ENCODE measurements at regions of chr19 and their contacts with region 1.

Region 1: GRCh38 chr19:6862673-6863078 is 24.7 kb upstream of the ADGRE1 start:
- DNase-seq: peak; percentile 84 to 96 (median 91)
- ATAC-seq: peak; percentile 90
- H3K4me3 ChIP-seq: peak overlapping the region in 1 of 2 experiments; percentile 33
- H3K4me3 Mint-ChIP-seq: peak overlapping the region; percentile 80
- H3K27ac ChIP-seq: peak overlapping the region in 1 of 2 experiments; percentile 68
- H3K27ac Mint-ChIP-seq: peak overlapping the region; percentile 74
- H3K4me1 ChIP-seq: peaks cover 4% of the 10 kb centered on the region
- H3K4me1 Mint-ChIP-seq: peaks cover 17% of the 10 kb centered on the region
- H3K27me3 ChIP-seq: no peaks in the 10 kb centered on the region
- H3K27me3 Mint-ChIP-seq: no peaks in the 10 kb centered on the region
- CTCF ChIP-seq: peak; percentile 61

Region 2: GRCh38 chr19:6048808-6049405 is 813.8 kb before region 1 on chr19:
- CTCF ChIA-PET with region 1: no interaction called
- POLR2A ChIA-PET with region 1: no interaction called
- intact Hi-C with region 1: loop called in 1 of 2 experiments (anchors 1 kb)
- DNase-seq: peak; percentile 62 to 88 (median 79)
- ATAC-seq: peak; percentile 100
- H3K4me3 ChIP-seq: no peak overlapping the region
- H3K4me3 Mint-ChIP-seq: no peak overlapping the region
- H3K27ac ChIP-seq: no peak overlapping the region
- H3K27ac Mint-ChIP-seq: no peak overlapping the region
- H3K4me1 ChIP-seq: peaks cover 3% of the 10 kb centered on the region
- H3K4me1 Mint-ChIP-seq: peaks cover 4% of the 10 kb centered on the region
- H3K27me3 ChIP-seq: no peaks in the 10 kb centered on the region
- H3K27me3 Mint-ChIP-seq: no peaks in the 10 kb centered on the region
- CTCF ChIP-seq: peak; percentile 84

Region 3: DNA sequence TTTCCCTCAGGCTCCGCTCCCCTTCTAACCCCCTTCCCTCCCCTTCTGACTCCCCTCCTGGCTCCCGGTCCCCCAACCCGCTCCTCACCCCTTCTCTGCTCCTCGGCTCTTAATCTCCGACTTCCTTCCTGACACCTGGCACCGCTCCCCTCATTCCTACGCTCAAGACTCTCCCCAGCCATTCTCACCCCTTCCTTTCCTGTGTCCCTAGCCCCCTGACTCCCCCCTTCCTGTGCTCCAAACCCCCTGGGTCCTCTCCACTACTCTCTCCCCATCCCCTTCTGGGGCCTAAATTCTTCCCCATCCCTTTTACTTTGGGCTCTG is 500.7 kb before region 1 on chr19:
- CTCF ChIA-PET with region 1: no interaction called
- POLR2A ChIA-PET with region 1: no interaction called
- intact Hi-C with region 1: loop called in 1 of 2 experiments (anchors 5 kb)
- DNase-seq: no peak
- ATAC-seq: peak; percentile 1
- H3K4me3 ChIP-seq: peak overlapping the region; percentile 78 to 79
- H3K4me3 Mint-ChIP-seq: peak overlapping the region; percentile 93
- H3K27ac ChIP-seq: peak overlapping the region; percentile 72 to 85
- H3K27ac Mint-ChIP-seq: peak overlapping the region; percentile 94
- H3K4me1 ChIP-seq: peaks cover 21% of the 10 kb centered on the region
- H3K4me1 Mint-ChIP-seq: peaks cover 25% of the 10 kb centered on the region
- H3K27me3 ChIP-seq: no peaks in the 10 kb centered on the region
- H3K27me3 Mint-ChIP-seq: no peaks in the 10 kb centered on the region
- CTCF ChIP-seq: no peak

Region 4: DNA sequence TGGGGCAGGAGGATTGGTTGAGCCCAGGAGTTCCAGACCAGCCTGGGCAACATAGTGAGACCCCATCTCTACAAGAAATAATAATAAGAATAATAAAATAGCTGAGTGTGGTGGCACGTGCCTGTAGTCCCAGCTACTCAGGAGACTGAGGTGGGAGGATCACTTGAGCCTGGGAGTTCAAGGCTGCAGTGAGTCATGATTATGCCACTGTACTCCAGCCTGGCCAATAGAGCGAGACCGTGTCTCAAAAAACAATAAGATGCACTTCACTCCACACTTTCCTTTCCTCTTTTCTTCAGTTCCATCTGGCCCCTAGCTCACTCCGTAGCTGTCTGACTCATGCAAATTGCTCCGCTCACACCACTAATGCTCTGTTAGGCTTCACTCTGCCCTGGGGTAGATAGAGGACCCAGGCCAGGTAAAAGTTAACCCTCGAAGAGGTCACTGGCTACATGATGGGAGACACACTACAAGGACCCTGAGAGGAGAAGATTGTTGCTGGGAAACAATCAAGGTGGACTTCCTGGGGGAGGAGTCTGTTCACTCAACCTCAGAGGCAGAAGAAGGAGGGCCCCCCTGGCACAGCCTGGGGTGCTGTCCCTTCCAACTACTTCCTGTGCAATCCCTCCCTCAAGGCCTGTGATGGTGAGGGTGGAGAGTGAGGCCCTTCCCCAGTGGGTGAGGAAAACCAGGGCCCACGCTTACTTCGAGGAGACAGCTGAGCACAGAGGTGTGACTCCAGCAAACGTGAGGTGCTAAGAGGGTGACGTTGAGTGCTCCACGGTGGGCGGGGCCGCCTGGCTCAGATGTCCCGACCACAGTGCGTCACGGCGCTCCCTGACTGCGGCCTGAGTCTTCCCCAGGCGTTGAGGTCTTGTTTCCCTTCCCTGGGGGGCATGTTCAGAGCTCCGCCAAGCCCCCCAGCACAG is 340.7 kb before region 1 on chr19:
- CTCF ChIA-PET with region 1: interaction called, 17 read pairs
- POLR2A ChIA-PET with region 1: interaction called, 7 read pairs
- intact Hi-C with region 1: loop called (anchors 1 kb)
- DNase-seq: peak; percentile 41 to 96 (median 70)
- ATAC-seq: peak; percentile 91
- H3K4me3 ChIP-seq: no peak overlapping the region
- H3K4me3 Mint-ChIP-seq: no peak overlapping the region
- H3K27ac ChIP-seq: peak overlapping the region; percentile 21 to 89
- H3K27ac Mint-ChIP-seq: peak overlapping the region; percentile 63
- H3K4me1 ChIP-seq: peaks cover 26% of the 10 kb centered on the region
- H3K4me1 Mint-ChIP-seq: peaks cover 32% of the 10 kb centered on the region
- H3K27me3 ChIP-seq: no peaks in the 10 kb centered on the region
- H3K27me3 Mint-ChIP-seq: no peaks in the 10 kb centered on the region
- CTCF ChIP-seq: no peak

Region 5: GRCh38 chr19:6674868-6675305 is 187.8 kb before region 1 on chr19:
- CTCF ChIA-PET with region 1: interaction called, 8 read pairs
- POLR2A ChIA-PET with region 1: no interaction called
- intact Hi-C with region 1: loop called in 1 of 2 experiments (anchors 5 kb)
- DNase-seq: peak; percentile 56 to 93 (median 86)
- ATAC-seq: peak; percentile 67
- H3K4me3 ChIP-seq: peak overlapping the region in 1 of 2 experiments; percentile 31
- H3K4me3 Mint-ChIP-seq: peak overlapping the region; percentile 50
- H3K27ac ChIP-seq: peak overlapping the region in 1 of 2 experiments; percentile 6
- H3K27ac Mint-ChIP-seq: peak overlapping the region; percentile 84
- H3K4me1 ChIP-seq: peaks cover 33% of the 10 kb centered on the region
- H3K4me1 Mint-ChIP-seq: peaks cover 45% of the 10 kb centered on the region
- H3K27me3 ChIP-seq: no peaks in the 10 kb centered on the region
- H3K27me3 Mint-ChIP-seq: no peaks in the 10 kb centered on the region
- CTCF ChIP-seq: no peak

Region 6: DNA sequence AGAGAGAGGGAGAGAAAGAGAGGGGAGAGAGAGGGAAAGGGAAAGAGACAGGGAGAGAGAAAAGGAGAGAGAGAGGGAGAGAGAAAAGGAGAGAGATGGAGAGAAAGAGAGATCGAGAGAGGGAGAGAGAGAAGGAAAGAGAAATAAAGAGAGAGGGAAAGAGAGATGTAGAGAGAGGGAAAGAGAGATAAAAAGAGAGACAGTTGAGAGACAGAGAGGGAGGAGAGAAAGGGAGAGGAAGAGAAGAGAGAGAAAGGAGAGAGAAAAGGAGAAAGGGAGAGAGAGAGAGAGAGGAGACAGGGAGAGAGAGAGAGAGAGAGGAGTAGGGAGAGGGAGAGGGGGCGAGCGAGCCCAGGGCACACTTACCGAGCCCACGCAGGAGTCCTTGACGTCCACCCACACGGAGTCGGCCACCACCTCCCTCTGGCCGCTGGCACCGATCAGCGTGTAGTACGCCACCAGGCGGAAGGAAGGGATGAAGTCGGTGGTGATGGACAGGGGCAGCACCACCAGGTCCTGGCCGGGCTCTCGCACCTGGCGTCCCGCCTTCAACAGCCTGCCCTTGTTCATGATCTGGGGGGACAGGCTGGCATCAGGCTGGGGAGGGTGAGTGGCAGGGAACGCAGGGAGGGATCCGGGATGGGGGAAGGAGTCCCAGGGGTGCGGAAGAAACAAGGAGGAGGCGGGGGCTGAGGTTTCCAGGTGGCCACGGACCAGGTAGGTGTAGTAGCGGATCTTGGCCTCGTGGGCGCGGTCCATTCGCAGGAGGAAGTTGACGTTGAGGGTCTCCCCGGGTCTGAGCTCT is 152.2 kb before region 1 on chr19:
- CTCF ChIA-PET with region 1: no interaction called
- POLR2A ChIA-PET with region 1: no interaction called
- intact Hi-C with region 1: no loop called
- DNase-seq: peak in 2 of 9 experiments; percentile 36 to 41
- ATAC-seq: no peak
- H3K4me3 ChIP-seq: no peak overlapping the region
- H3K4me3 Mint-ChIP-seq: peak overlapping the region; percentile 36
- H3K27ac ChIP-seq: no peak overlapping the region
- H3K27ac Mint-ChIP-seq: no peak overlapping the region
- H3K4me1 ChIP-seq: peaks cover 8% of the 10 kb centered on the region
- H3K4me1 Mint-ChIP-seq: peaks cover 13% of the 10 kb centered on the region
- H3K27me3 ChIP-seq: peaks cover 0 to 25% of the 10 kb centered on the region in 2 experiments
- H3K27me3 Mint-ChIP-seq: peaks cover 28% of the 10 kb centered on the region
- CTCF ChIP-seq: no peak

Region 7: DNA sequence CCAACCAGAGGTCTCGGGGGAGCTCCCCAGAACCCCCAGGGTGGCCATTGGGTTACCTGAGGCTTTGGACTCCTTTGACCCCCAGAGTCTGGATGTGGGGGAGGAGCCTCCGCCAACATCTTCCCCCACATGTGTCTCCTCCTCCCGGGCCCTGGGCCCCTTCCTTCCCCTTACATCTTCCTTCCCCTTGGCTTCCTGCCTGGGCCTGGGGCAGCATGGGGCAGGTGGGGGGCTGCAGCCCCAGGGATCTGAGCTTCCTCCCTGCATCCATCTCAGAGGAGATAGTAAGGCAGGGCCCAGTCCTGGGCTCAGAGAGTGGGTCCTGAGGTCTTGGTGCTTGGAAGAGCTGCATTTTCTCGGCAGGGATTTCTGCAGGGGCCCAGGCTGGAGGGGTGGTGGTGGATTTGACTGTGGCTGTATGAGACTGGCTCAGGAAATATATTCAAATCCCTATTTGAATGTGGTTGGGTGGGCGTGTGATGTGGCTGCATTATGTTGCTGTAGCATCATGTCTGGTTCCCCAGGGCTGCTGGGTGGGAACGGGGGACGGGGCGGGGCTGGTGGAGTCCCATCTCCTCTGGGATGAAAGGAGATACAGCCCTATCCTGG is 89.2 kb before region 1 on chr19:
- CTCF ChIA-PET with region 1: interaction called, 16 read pairs
- POLR2A ChIA-PET with region 1: interaction called, 7 read pairs
- intact Hi-C with region 1: no loop called
- DNase-seq: peak in 8 of 9 experiments; percentile 31 to 75 (median 56)
- ATAC-seq: peak; percentile 29
- H3K4me3 ChIP-seq: peak overlapping the region; percentile 99 to 100
- H3K4me3 Mint-ChIP-seq: peak overlapping the region; percentile 87
- H3K27ac ChIP-seq: peak overlapping the region; percentile 84 to 87
- H3K27ac Mint-ChIP-seq: peak overlapping the region; percentile 94
- H3K4me1 ChIP-seq: peaks cover 36% of the 10 kb centered on the region
- H3K4me1 Mint-ChIP-seq: peaks cover 55% of the 10 kb centered on the region
- H3K27me3 ChIP-seq: no peaks in the 10 kb centered on the region
- H3K27me3 Mint-ChIP-seq: no peaks in the 10 kb centered on the region
- CTCF ChIP-seq: no peak

Region 8: GRCh38 chr19:6891761-6892385 is 29.2 kb after region 1 on chr19:
- CTCF ChIA-PET with region 1: interaction called, 29 read pairs
- POLR2A ChIA-PET with region 1: interaction called, 22 read pairs
- intact Hi-C with region 1: loop called in 1 of 2 experiments (anchors 2 kb)
- DNase-seq: peak in 2 of 9 experiments; percentile 24 to 61
- ATAC-seq: peak; percentile 32
- H3K4me3 ChIP-seq: no peak overlapping the region
- H3K4me3 Mint-ChIP-seq: peak overlapping the region; percentile 49
- H3K27ac ChIP-seq: peak overlapping the region in 1 of 2 experiments; percentile 32
- H3K27ac Mint-ChIP-seq: peak overlapping the region; percentile 87
- H3K4me1 ChIP-seq: peaks cover 66% of the 10 kb centered on the region
- H3K4me1 Mint-ChIP-seq: peaks cover 83% of the 10 kb centered on the region
- H3K27me3 ChIP-seq: no peaks in the 10 kb centered on the region
- H3K27me3 Mint-ChIP-seq: no peaks in the 10 kb centered on the region
- CTCF ChIP-seq: no peak

Measured in CD8-positive, alpha-beta T cell (primary cell).